Vagina (tissue), 2 donors: ENCODE measurements at regions of chr6 and their contacts with region 1.

Region 1: GRCh38 chr6:9948678-9949077 is 466.2 kb downstream of the TFAP2A start:
- DNase-seq: no peak
- H3K4me3 ChIP-seq: no peak overlapping the region
- H3K27ac ChIP-seq: no peak overlapping the region
- H3K4me1 ChIP-seq: no peaks in the 10 kb centered on the region
- H3K27me3 ChIP-seq: no peaks in the 10 kb centered on the region
- CTCF ChIP-seq: no peak
- POLR2A ChIP-seq: no peak

Region 2: GRCh38 chr6:9789201-9789600 is 159.5 kb before region 1 on chr6:
- intact Hi-C with region 1: loop called (anchors 5 kb)
- DNase-seq: no peak
- H3K4me3 ChIP-seq: no peak overlapping the region
- H3K27ac ChIP-seq: no peak overlapping the region
- H3K4me1 ChIP-seq: no peaks in the 10 kb centered on the region
- H3K27me3 ChIP-seq: no peaks in the 10 kb centered on the region
- CTCF ChIP-seq: no peak
- POLR2A ChIP-seq: no peak